ENCODE measurements at regions of chr19 and their contacts with region 1.

Region 1: GRCh38 chr19:54674021-54674617 is 11.3 kb downstream of the LILRB4 start:
- DNase-seq: peak in 1 of 2 donors; percentile 33
- H3K4me3 ChIP-seq: no peak overlapping the region
- H3K27ac ChIP-seq: no peak overlapping the region
- H3K4me1 ChIP-seq: no peaks in the 10 kb centered on the region
- H3K27me3 ChIP-seq: peaks cover 0 to 35% (median 12%) of the 10 kb centered on the region in 3 donors
- CTCF ChIP-seq: peak in 3 of 7 experiments; percentile 21 to 51 (median 26)
- EP300 ChIP-seq: no peak
- POLR2A ChIP-seq: no peak

Region 2: DNA sequence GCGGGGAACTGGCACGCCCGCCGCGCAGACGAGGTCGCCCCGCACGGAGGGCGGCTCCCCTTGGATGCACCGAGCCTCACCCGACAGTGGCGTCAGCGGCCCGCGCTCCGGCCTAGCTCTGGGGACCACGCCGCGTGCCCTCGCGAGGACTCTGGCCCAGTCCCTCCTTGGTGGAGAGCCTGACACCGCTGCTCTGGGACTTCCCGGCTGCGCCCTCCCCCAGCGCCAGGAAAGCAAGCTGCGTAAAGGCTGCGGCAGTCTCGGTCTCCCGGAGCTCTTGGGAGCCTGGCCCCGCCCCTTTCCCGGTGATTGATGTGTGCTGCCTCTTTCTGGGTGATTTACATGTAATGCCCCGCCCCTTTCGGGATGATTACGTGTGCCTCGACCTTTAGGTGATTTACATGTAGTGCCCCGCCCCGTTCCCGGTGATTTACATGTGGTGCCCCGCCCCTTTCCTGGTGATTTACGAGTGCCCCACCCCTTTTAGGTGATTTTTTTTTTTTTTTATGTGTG is 210.5 kb before region 1 on chr19 and contains the start of gene LENG9:
- intact Hi-C with region 1: no loop called
- DNase-seq: peak; percentile 99 to 100
- H3K4me3 ChIP-seq: peak within 1 kb of the TSS; percentile 46 to 70 (median 66)
- H3K27ac ChIP-seq: peak within 1 kb of the TSS; percentile 98 to 99 (median 99)
- H3K4me1 ChIP-seq: peaks cover 32 to 79% (median 68%) of the 10 kb centered on the region in 4 donors
- H3K27me3 ChIP-seq: no peaks in the 10 kb centered on the region
- CTCF ChIP-seq: no peak
- EP300 ChIP-seq: no peak
- POLR2A ChIP-seq: peak in 2 of 4 donors; percentile 80 to 83
- total RNA-seq, gene LENG9: 1.3 to 14.5 (median 3.5) TPM

Region 3: GRCh38 chr19:54481322-54481930 is 192.7 kb before region 1 on chr19:
- intact Hi-C with region 1: loop called (anchors 10 kb)
- DNase-seq: peak in 1 of 2 donors; percentile 80
- H3K4me3 ChIP-seq: no peak overlapping the region
- H3K27ac ChIP-seq: no peak overlapping the region
- H3K4me1 ChIP-seq: peaks cover 0 to 15% (median 4%) of the 10 kb centered on the region in 4 donors
- H3K27me3 ChIP-seq: peaks cover 0 to 68% (median 8%) of the 10 kb centered on the region in 3 donors
- CTCF ChIP-seq: peak in 4 of 7 experiments; percentile 29 to 50 (median 32)
- EP300 ChIP-seq: no peak
- POLR2A ChIP-seq: no peak

Region 4: DNA sequence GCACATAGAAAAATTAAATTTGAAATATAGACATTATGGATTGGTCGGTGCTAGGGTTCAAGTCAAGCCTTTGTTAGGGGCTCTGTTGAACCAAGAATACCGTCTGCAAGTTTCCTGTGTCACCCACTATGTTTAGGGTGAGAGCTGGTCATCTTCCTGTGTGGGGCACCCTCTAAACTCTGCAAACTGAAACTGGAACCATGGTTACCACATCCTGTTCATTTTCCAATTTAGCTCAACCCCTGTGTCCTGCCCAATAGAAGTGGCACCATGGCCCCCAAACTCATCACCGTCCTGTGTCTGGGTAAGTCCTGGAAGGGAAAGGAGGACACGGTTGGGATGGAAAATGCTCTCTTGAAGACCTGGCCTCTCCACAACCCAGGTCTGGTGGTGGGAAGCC is 141.6 kb before region 1 on chr19:
- intact Hi-C with region 1: no loop called
- DNase-seq: peak in 1 of 2 donors; percentile 9
- H3K4me3 ChIP-seq: no peak overlapping the region
- H3K27ac ChIP-seq: no peak overlapping the region
- H3K4me1 ChIP-seq: no peaks in the 10 kb centered on the region
- H3K27me3 ChIP-seq: peaks cover 0 to 47% (median 6%) of the 10 kb centered on the region in 3 donors
- CTCF ChIP-seq: no peak
- EP300 ChIP-seq: no peak
- POLR2A ChIP-seq: no peak

Region 5: DNA sequence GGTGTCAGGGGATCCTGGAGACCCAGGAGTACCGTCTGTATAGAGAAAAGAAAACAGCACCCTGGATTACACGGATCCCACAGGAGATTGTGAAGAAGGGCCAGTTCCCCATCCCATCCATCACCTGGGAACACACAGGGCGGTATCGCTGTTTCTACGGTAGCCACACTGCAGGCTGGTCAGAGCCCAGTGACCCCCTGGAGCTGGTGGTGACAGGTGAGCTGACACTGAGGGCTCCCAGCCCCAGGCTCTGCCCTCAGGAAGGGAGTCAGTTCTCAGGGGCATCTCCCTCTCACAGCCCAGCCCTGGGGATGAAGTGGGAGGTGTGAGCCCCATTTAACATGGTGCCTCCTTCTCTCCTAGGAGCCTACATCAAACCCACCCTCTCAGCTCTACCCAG is 79.4 kb before region 1 on chr19:
- intact Hi-C with region 1: no loop called
- DNase-seq: no peak
- H3K4me3 ChIP-seq: peak overlapping the region in 1 of 4 donors; percentile 24
- H3K27ac ChIP-seq: no peak overlapping the region
- H3K4me1 ChIP-seq: no peaks in the 10 kb centered on the region
- H3K27me3 ChIP-seq: peaks cover 0 to 34% (median 0%) of the 10 kb centered on the region in 3 donors
- CTCF ChIP-seq: no peak
- EP300 ChIP-seq: no peak
- POLR2A ChIP-seq: no peak

Region 6: GRCh38 chr19:54727562-54727961 is 53.4 kb after region 1 on chr19:
- intact Hi-C with region 1: no loop called
- DNase-seq: no peak
- H3K4me3 ChIP-seq: no peak overlapping the region
- H3K27ac ChIP-seq: no peak overlapping the region
- H3K4me1 ChIP-seq: no peaks in the 10 kb centered on the region
- H3K27me3 ChIP-seq: peaks cover 0 to 9% (median 0%) of the 10 kb centered on the region in 3 donors
- CTCF ChIP-seq: no peak
- EP300 ChIP-seq: no peak
- POLR2A ChIP-seq: no peak

Measured in stomach (tissue), 19 donors.